ENCODE measurements at regions of chr4 and their contacts with region 1.

Region 1: DNA sequence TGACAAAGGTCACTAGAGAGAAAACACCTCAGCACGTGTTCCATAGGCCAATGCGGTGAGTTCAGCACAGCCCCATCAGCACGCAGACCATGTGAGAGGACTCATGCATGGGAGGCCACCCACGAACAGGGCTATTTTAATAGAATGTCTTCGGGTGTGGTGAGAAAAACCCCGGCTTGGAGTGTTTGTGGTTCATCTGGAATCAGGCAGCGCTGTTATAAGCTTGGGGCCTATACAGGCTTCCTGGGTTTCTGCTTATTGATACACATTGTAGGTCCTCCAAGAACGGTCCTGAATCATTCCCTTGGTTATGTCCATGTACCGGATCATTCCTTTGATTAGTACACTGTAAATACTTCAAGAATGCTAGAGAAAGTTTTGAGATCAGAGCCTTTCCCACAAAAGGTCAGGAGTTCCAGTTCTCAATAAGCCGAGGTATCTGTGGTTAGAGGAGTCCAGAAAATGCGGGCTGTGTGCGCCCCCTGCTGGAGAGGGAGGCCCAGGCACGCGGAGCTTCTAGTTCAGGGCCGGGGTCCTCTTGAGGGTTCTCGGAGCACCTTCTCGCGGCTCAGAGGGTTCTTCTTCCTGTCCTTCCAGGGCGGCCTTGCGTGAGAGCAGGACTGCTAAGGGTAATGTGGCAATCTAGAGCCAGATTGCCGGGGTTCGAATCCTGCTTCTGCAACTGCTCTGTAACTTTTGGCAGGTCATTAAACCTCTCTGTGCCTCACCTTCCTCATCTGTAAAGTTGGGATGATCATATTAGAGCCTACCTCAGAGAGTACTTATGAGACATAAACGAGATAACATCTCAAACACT is 51.8 kb downstream of the TLR10 start:
- DNase-seq: peak; percentile 94
- ATAC-seq: peak; percentile 97
- H3K4me3 ChIP-seq: no peak overlapping the region
- H3K27ac ChIP-seq: no peak overlapping the region
- H3K4me1 ChIP-seq: peaks cover 3% of the 10 kb centered on the region; the same call in 1 of the 2 replicates
- H3K27me3 ChIP-seq: peaks cover 7% of the 10 kb centered on the region
- CTCF ChIP-seq: peak; percentile 87
- POLR2A ChIP-seq: no peak; the same call in 1 of the 2 replicates
- RAD21 ChIP-seq: peak; percentile 91

Region 2: DNA sequence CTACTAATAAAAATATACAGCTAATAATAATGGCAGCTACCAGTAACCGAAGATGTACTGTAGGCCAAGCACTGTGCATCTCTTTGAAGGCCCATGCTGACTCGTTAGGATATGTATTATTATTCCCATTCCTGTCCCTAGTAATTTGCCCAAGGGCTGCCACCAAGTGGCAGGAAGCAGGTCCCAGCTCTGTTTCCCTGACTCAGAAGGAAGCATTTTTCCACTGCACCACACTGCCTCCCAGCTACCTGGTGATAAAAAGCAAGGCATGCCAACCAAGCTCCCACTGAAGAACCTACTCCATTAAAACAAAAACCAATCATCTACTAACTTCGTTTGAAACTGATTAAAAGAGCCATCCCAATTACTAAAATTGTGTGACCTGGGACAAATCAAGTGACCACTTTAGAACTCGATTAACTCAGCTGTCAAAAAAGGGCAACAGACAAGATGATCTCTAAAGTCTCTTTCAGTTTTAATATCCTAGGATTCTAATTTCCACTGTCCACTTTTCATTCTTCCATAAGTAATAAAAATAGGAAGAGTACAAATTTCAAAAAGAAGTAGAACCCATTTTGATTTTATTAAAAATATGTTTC is 928.9 kb before region 1 on chr4:
- CTCF ChIA-PET with region 1: no interaction called
- POLR2A ChIA-PET with region 1: no interaction called
- dilution Hi-C with region 1: no loop called
- in situ Hi-C with region 1: loop called (anchors 10 kb)
- intact Hi-C with region 1: loop called (anchors 10 kb)
- DNase-seq: peak; percentile 60
- ATAC-seq: peak; percentile 87
- H3K4me3 ChIP-seq: no peak overlapping the region
- H3K27ac ChIP-seq: no peak overlapping the region
- H3K4me1 ChIP-seq: no peaks in the 10 kb centered on the region
- H3K27me3 ChIP-seq: peaks cover 7% of the 10 kb centered on the region
- CTCF ChIP-seq: peak; percentile 73
- POLR2A ChIP-seq: no peak
- RAD21 ChIP-seq: peak; percentile 70

Region 3: DNA sequence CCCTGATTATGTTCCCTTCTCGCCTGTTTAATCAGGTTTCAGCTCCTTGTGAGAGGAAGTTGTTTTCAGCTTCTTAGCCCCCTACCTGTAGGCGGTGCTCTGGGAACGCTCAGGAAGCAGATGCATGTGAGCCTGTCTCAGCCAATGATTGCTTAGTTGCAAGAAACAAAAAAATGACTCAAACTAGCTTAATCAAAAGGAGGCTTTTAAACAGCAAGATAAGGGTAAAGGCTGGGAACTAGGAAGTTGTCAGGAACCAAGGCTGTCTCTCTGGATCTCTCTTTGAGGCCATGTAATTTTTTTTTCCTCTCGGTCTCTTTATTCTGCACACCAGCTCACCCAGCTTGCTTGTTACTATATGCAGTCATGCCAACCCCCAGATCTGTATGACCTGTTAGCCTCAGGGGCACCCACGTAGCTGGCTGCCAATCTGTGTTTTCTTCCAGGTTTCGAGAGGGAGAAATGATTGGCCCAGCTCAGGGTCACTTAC is 661.7 kb before region 1 on chr4:
- CTCF ChIA-PET with region 1: interaction called, 5 read pairs
- POLR2A ChIA-PET with region 1: interaction called, 11 read pairs
- dilution Hi-C with region 1: no loop called
- in situ Hi-C with region 1: loop called (anchors 5 kb)
- intact Hi-C with region 1: loop called (anchors 1 kb)
- DNase-seq: peak; percentile 89
- ATAC-seq: peak; percentile 93
- H3K4me3 ChIP-seq: no peak overlapping the region
- H3K27ac ChIP-seq: no peak overlapping the region
- H3K4me1 ChIP-seq: peaks cover 17% of the 10 kb centered on the region
- H3K27me3 ChIP-seq: no peaks in the 10 kb centered on the region
- CTCF ChIP-seq: peak; percentile 79
- POLR2A ChIP-seq: no peak
- RAD21 ChIP-seq: peak; percentile 85

Region 4: DNA sequence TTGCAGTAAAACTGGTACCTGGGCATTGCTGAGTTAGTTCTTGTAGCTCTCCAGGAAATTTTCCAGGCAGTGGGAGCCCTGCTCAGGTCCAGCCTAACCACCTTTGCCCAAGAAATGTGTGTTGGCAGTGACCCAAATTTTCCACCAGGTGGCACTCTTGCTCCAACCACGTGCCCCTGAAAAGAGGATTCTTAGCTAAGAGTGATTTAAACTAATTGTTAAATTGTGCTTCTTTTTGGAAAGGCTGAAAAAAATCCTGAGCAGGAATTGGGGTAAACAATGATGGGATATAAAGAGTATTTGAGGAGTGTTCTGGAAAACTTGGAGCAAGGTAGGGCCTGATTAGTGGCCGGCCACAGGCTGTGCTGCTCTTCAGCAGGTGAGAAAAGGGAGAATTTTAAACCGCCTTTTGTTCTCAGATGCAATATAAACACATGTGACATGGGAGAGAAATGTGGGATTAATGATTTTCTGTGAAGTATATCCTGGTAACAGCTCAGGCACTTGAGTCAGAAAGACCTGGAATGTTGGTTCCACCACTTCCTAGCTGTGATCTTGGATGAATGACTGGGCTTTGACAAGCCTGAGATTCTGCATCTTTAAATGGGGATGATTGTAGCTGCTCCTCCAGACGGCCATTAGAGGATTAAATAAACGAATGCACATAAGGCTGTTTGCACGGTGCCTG is 551.2 kb before region 1 on chr4:
- CTCF ChIA-PET with region 1: interaction called, 5 read pairs
- POLR2A ChIA-PET with region 1: no interaction called
- dilution Hi-C with region 1: no loop called
- in situ Hi-C with region 1: loop called (anchors 5 kb)
- intact Hi-C with region 1: loop called (anchors 1 kb)
- DNase-seq: peak; percentile 77
- ATAC-seq: peak; percentile 90
- H3K4me3 ChIP-seq: no peak overlapping the region
- H3K27ac ChIP-seq: no peak overlapping the region
- H3K4me1 ChIP-seq: peaks cover 12% of the 10 kb centered on the region
- H3K27me3 ChIP-seq: no peaks in the 10 kb centered on the region
- CTCF ChIP-seq: peak; percentile 85
- POLR2A ChIP-seq: no peak
- RAD21 ChIP-seq: peak; percentile 92

Region 5: GRCh38 chr4:38302910-38303309 is 428.1 kb before region 1 on chr4:
- CTCF ChIA-PET with region 1: no interaction called
- POLR2A ChIA-PET with region 1: no interaction called
- dilution Hi-C with region 1: no loop called
- in situ Hi-C with region 1: no loop called
- intact Hi-C with region 1: no loop called
- DNase-seq: no peak
- ATAC-seq: no peak
- H3K4me3 ChIP-seq: no peak overlapping the region
- H3K27ac ChIP-seq: no peak overlapping the region
- H3K4me1 ChIP-seq: no peaks in the 10 kb centered on the region
- H3K27me3 ChIP-seq: no peaks in the 10 kb centered on the region
- CTCF ChIP-seq: no peak
- POLR2A ChIP-seq: no peak
- RAD21 ChIP-seq: no peak

Region 6: GRCh38 chr4:38654273-38654672 is 76.8 kb before region 1 on chr4:
- CTCF ChIA-PET with region 1: no interaction called
- POLR2A ChIA-PET with region 1: no interaction called
- dilution Hi-C with region 1: no loop called
- in situ Hi-C with region 1: no loop called
- intact Hi-C with region 1: no loop called
- DNase-seq: no peak
- ATAC-seq: no peak
- H3K4me3 ChIP-seq: no peak overlapping the region
- H3K27ac ChIP-seq: no peak overlapping the region
- H3K4me1 ChIP-seq: no peaks in the 10 kb centered on the region
- H3K27me3 ChIP-seq: peaks cover 7% of the 10 kb centered on the region; the same call in 1 of the 2 replicates
- CTCF ChIP-seq: no peak
- POLR2A ChIP-seq: no peak
- RAD21 ChIP-seq: no peak

Region 7: GRCh38 chr4:38675146-38676121 is 55.6 kb before region 1 on chr4:
- CTCF ChIA-PET with region 1: interaction called, 3 read pairs
- POLR2A ChIA-PET with region 1: no interaction called
- dilution Hi-C with region 1: no loop called
- in situ Hi-C with region 1: no loop called
- intact Hi-C with region 1: loop called (anchors 1 kb)
- DNase-seq: peak; percentile 88
- ATAC-seq: peak; percentile 70
- H3K4me3 ChIP-seq: no peak overlapping the region
- H3K27ac ChIP-seq: no peak overlapping the region
- H3K4me1 ChIP-seq: peaks cover 40% of the 10 kb centered on the region
- H3K27me3 ChIP-seq: no peaks in the 10 kb centered on the region
- CTCF ChIP-seq: peak; percentile 94
- POLR2A ChIP-seq: no peak
- RAD21 ChIP-seq: peak; percentile 98

Measured in IMR-90 (cell line).